GM12878 (cell line): ENCODE measurements at regions of chr6 and their contacts with region 1.

Region 1: GRCh38 chr6:36623547-36624459 is 29.6 kb downstream of the SRSF3 start:
- DNase-seq: peak; percentile 68
- ATAC-seq: peak; percentile 84
- H3K4me3 ChIP-seq: no peak overlapping the region
- H3K27ac ChIP-seq: peak overlapping the region; percentile 63
- H3K4me1 ChIP-seq: peaks cover 35% of the 10 kb centered on the region
- H3K27me3 ChIP-seq: no peaks in the 10 kb centered on the region
- CTCF ChIP-seq: peak; percentile 89 to 95 (median 95)
- EP300 ChIP-seq: no peak
- POLR2A ChIP-seq: no peak
- RAD21 ChIP-seq: peak; percentile 98

Region 2: DNA sequence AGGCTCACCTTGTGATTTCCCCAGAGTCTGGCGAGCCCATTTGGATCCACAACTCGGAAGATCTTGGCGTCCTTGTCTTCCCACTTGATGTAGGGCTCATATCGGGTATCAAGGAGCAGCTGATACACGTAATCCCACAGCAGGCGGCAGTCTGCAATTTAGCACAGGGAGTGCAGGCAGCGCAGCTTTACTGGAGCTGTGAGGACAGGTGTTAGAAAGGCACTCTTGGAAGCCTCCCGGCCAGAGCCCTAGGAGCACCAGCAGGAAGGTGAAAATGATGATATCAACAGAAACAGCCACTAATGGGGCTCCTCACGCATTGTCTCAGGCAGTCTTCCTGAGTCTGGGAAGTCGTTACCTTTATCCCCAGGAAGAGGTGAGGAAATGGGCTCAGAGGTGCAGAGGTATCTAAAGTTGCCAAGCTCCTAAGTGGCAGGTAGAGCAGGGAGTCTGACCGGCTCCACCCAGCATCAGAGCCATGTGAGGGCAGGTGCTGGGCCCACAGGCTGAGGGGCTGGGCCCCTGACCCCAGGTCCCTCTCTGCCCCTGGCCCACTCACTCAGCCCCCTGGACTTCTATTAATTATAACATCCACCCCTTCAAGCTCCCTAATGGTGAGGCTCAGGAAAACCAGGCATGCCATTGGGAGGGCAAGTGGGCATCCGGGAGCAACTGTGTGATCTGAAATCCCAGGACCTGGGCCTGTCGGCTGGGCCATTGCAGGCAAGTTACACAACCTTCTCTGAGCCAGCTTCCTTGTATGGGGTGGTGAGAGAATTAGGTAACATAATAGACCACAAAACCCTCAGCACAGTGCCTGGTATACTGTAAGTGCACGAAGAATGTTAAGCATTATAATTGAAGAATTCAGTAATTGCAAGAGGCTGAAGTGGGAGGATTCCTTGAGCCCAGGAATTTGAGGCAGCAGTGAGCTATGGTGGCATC is 254.6 kb before region 1 on chr6:
- CTCF ChIA-PET with region 1: no interaction called
- POLR2A ChIA-PET with region 1: no interaction called
- RAD21 ChIA-PET with region 1: no interaction called
- SMC1A ChIA-PET with region 1: no interaction called
- in situ Hi-C with region 1: no loop called
- intact Hi-C with region 1: no loop called
- DNase-seq: no peak
- ATAC-seq: no peak
- H3K4me3 ChIP-seq: no peak overlapping the region
- H3K27ac ChIP-seq: no peak overlapping the region
- H3K4me1 ChIP-seq: peaks cover 26% of the 10 kb centered on the region
- H3K27me3 ChIP-seq: no peaks in the 10 kb centered on the region
- CTCF ChIP-seq: no peak
- EP300 ChIP-seq: no peak
- POLR2A ChIP-seq: no peak
- RAD21 ChIP-seq: no peak

Region 3: DNA sequence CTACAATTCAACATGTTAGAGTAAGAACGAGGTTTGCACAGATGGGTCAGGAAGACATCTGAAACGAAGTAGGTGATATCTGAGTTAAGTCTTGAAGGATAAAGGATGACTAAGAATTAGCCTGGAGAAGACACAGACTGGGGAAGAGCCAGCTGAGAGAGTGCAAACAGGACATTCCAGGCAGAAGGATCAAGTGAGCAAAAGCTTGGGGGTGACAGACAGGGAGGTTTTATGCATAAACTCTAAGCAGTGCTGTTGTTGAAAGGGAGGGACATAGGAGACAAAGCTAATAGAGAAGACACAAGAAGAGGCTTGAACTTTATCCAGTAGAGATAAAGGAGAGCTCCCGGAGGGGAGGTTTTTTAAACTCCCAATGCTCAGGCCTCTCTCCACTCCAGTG is 221.3 kb before region 1 on chr6:
- CTCF ChIA-PET with region 1: no interaction called
- POLR2A ChIA-PET with region 1: no interaction called
- RAD21 ChIA-PET with region 1: no interaction called
- SMC1A ChIA-PET with region 1: no interaction called
- in situ Hi-C with region 1: no loop called
- intact Hi-C with region 1: no loop called
- DNase-seq: no peak
- ATAC-seq: no peak
- H3K4me3 ChIP-seq: no peak overlapping the region
- H3K27ac ChIP-seq: no peak overlapping the region
- H3K4me1 ChIP-seq: peaks cover 8% of the 10 kb centered on the region
- H3K27me3 ChIP-seq: no peaks in the 10 kb centered on the region
- CTCF ChIP-seq: no peak
- EP300 ChIP-seq: no peak
- POLR2A ChIP-seq: no peak
- RAD21 ChIP-seq: no peak

Region 4: GRCh38 chr6:36642913-36643817 is 19.4 kb after region 1 on chr6:
- CTCF ChIA-PET with region 1: interaction called, 10 read pairs
- POLR2A ChIA-PET with region 1: interaction called, 6 read pairs
- RAD21 ChIA-PET with region 1: interaction called, 10 read pairs
- SMC1A ChIA-PET with region 1: interaction called, 18 read pairs
- in situ Hi-C with region 1: no loop called
- intact Hi-C with region 1: no loop called
- DNase-seq: no peak
- ATAC-seq: no peak
- H3K4me3 ChIP-seq: no peak overlapping the region
- H3K27ac ChIP-seq: no peak overlapping the region
- H3K4me1 ChIP-seq: peaks cover 12% of the 10 kb centered on the region
- H3K27me3 ChIP-seq: no peaks in the 10 kb centered on the region
- CTCF ChIP-seq: no peak
- EP300 ChIP-seq: no peak
- POLR2A ChIP-seq: no peak
- RAD21 ChIP-seq: no peak

Region 5: DNA sequence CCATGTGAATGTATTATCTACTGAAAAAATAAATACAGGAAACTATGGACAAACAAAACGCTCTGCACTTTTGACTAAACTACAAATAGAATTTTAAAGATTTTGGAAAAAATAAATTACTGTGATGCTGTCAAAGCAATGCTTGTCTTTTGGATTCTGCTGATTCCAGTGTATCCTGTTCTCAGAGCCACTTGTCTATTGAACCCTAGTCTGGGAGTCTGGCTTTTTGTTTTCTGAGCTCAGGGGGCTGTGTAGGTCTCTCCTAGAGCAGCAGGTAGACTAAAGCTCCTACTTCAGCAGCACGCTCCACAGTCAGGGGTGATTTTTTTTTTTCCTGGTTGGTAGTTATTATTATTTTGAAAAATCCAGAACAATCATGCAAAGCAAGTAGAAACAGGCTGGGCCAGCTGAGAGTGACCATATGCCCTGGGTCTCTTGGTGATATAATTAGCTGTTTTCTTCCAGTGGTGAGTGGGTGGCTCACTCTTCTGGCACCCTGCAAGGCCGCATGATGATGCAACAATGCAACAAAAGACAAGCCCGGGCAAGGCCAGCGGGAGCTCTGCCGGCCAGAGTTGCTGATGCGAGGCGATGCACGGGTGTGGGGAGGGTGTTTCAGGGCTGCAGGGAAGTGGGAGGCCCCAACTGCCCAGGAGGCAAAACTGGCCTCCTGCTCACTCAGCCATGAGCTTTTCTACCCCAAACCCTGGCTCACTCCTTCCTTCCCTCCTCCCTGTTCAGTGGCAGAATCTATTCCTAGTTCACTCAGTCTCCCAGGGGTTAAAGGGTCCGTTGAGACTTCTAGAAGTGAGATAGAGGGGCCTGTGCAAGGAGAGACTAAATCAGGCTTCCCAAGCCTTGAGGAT is 43.2 kb after region 1 on chr6:
- CTCF ChIA-PET with region 1: interaction called, 38 read pairs
- POLR2A ChIA-PET with region 1: interaction called, 12 read pairs
- RAD21 ChIA-PET with region 1: interaction called, 27 read pairs
- SMC1A ChIA-PET with region 1: interaction called, 46 read pairs
- in situ Hi-C with region 1: no loop called
- intact Hi-C with region 1: no loop called
- DNase-seq: peak; percentile 91
- ATAC-seq: peak; percentile 86
- H3K4me3 ChIP-seq: peak overlapping the region; percentile 41; the same call in 1 of the 2 replicates
- H3K27ac ChIP-seq: peak overlapping the region; percentile 92
- H3K4me1 ChIP-seq: peaks cover 64% of the 10 kb centered on the region
- H3K27me3 ChIP-seq: no peaks in the 10 kb centered on the region
- CTCF ChIP-seq: no peak; a peak in 1 of 6 replicates
- EP300 ChIP-seq: peak; percentile 94 to 97
- POLR2A ChIP-seq: peak; percentile 49
- RAD21 ChIP-seq: no peak; the same call in 1 of the 2 replicates

Region 6: DNA sequence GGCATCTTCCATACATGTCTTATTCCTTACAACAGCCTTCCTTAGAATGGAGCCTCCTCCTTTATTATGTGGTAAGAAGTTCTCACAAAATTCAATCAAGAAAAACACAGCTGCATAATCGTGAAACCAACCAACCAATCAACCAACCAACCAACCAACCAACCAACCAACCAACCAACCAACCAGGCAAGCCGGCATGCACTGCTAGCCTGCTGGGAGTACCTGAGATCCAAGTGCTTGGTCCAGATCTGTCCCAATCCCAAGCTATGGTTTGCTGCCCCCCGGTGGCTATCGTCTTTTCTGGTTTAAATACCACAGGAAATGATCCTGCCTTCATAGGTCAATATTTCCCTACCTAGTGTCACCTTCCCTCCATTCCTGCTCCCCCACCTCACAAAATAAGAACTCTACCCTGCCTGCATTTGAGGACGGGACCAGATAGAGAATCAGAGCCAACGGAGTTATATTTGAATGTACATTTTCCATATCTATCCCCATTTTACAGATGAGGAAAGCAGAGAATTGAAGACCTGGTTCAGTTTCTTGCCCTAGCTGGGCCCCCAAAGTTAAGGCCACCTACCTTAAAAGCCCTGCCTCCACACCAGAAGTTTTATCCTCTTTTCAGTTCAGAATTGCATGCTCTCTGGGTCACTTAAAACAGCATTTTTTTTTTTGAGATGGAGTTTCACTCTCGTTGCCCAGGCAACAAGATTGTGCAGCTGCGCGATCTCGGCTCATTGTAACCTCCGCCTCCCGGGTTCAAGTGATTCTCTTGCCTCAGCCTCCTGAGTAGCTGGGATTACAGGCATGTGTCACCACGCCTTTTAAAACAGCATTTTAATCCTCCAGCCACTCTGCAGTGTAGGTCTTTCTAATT is 100.9 kb after region 1 on chr6:
- CTCF ChIA-PET with region 1: interaction called, 29 read pairs
- POLR2A ChIA-PET with region 1: interaction called, 4 read pairs
- RAD21 ChIA-PET with region 1: interaction called, 6 read pairs
- SMC1A ChIA-PET with region 1: interaction called, 18 read pairs
- in situ Hi-C with region 1: no loop called
- intact Hi-C with region 1: loop called (anchors 1 kb)
- DNase-seq: no peak
- ATAC-seq: peak; percentile 34
- H3K4me3 ChIP-seq: no peak overlapping the region
- H3K27ac ChIP-seq: 0 out of 2 replicates have a peak overlapping the region, but pooled peaks have one; percentile 9
- H3K4me1 ChIP-seq: peaks cover 36% of the 10 kb centered on the region
- H3K27me3 ChIP-seq: no peaks in the 10 kb centered on the region
- CTCF ChIP-seq: peak; percentile 43 to 69 (median 51)
- EP300 ChIP-seq: no peak
- POLR2A ChIP-seq: no peak
- RAD21 ChIP-seq: peak; percentile 69

Region 7: GRCh38 chr6:36780442-36781177 is 156.8 kb after region 1 on chr6:
- CTCF ChIA-PET with region 1: interaction called, 10 read pairs
- POLR2A ChIA-PET with region 1: no interaction called
- RAD21 ChIA-PET with region 1: interaction called, 3 read pairs
- SMC1A ChIA-PET with region 1: interaction called, 7 read pairs
- in situ Hi-C with region 1: no loop called
- intact Hi-C with region 1: no loop called
- DNase-seq: no peak
- ATAC-seq: no peak
- H3K4me3 ChIP-seq: no peak overlapping the region
- H3K27ac ChIP-seq: no peak overlapping the region
- H3K4me1 ChIP-seq: peaks cover 21% of the 10 kb centered on the region
- H3K27me3 ChIP-seq: peaks cover 0 to 6% of the 10 kb centered on the region in 2 experiments; a peak in 1 of 4 replicates
- CTCF ChIP-seq: no peak
- EP300 ChIP-seq: no peak
- POLR2A ChIP-seq: no peak
- RAD21 ChIP-seq: no peak